Ascending aorta (tissue), 2 donors: ENCODE measurements at regions of chr9 and their contacts with region 1.

Region 1: DNA sequence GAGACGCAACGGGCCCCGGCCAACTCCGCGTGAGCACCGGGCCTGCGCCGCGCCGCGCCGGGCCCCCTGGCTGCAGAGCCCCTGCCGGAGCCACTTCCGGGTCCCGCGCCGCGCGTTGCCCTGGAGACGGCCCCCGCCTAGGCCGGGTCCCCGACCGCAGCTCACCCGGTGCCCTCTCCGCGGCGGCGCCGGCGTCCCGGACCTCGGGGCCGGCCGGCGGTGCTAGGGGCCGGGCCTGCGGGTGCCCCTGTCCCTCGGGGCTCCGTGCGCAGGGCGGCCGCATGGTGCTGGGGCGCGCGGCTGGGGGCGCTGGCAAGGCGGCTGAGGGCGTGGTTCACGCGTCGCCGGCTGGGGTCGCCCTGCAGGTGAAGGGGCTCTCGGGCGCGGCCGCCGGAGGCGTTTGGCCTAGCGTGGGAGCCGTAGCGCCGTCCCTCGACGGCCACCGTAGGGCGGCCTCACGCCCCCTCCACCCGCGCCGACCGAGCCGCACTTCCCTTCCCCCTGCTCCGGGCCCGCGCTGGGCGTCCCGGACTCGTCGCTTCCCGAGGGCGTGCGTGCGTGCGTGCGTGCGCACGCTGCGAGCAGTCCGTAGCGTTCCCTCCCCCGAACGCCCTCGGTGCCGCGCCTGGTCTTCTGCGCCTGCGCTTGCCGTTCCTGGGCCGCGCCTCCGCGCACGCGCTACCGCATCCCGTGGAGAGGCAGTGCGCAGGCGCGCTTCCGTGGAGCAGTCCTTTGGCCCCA is at the start of gene TMEM250:
- DNase-seq: peak; percentile 74 to 96
- H3K4me3 ChIP-seq: peak within 1 kb of the TSS; percentile 71 to 86
- H3K27ac ChIP-seq: peak within 1 kb of the TSS; percentile 88 to 94
- H3K4me1 ChIP-seq: peaks cover 10 to 19% of the 10 kb centered on the region in 2 donors
- H3K27me3 ChIP-seq: no peaks in the 10 kb centered on the region
- CTCF ChIP-seq: peak in 1 of 3 experiments; percentile 38
- total RNA-seq, gene TMEM250: 80.3 TPM

Region 2: GRCh38 chr9:135864447-135865049 is 253.9 kb before region 1 on chr9:
- intact Hi-C with region 1: loop called (anchors 2 kb)
- DNase-seq: no peak
- H3K4me3 ChIP-seq: no peak overlapping the region
- H3K27ac ChIP-seq: no peak overlapping the region
- H3K4me1 ChIP-seq: no peaks in the 10 kb centered on the region
- H3K27me3 ChIP-seq: no peaks in the 10 kb centered on the region
- CTCF ChIP-seq: peak; percentile 66 to 80 (median 78)

Region 3: GRCh38 chr9:135961277-135961705 is 157.2 kb before region 1 on chr9 and contains the start of gene UBAC1:
- intact Hi-C with region 1: loop called (anchors 1 kb)
- DNase-seq: peak; percentile 86 to 98
- H3K4me3 ChIP-seq: peak within 1 kb of the TSS; percentile 67 to 96
- H3K27ac ChIP-seq: peak within 1 kb of the TSS; percentile 73 to 91
- H3K4me1 ChIP-seq: peaks cover 3 to 12% of the 10 kb centered on the region in 2 donors
- H3K27me3 ChIP-seq: no peaks in the 10 kb centered on the region
- CTCF ChIP-seq: peak in 2 of 3 experiments; percentile 13 to 70
- total RNA-seq, gene UBAC1: 31.0 TPM

Region 4: DNA sequence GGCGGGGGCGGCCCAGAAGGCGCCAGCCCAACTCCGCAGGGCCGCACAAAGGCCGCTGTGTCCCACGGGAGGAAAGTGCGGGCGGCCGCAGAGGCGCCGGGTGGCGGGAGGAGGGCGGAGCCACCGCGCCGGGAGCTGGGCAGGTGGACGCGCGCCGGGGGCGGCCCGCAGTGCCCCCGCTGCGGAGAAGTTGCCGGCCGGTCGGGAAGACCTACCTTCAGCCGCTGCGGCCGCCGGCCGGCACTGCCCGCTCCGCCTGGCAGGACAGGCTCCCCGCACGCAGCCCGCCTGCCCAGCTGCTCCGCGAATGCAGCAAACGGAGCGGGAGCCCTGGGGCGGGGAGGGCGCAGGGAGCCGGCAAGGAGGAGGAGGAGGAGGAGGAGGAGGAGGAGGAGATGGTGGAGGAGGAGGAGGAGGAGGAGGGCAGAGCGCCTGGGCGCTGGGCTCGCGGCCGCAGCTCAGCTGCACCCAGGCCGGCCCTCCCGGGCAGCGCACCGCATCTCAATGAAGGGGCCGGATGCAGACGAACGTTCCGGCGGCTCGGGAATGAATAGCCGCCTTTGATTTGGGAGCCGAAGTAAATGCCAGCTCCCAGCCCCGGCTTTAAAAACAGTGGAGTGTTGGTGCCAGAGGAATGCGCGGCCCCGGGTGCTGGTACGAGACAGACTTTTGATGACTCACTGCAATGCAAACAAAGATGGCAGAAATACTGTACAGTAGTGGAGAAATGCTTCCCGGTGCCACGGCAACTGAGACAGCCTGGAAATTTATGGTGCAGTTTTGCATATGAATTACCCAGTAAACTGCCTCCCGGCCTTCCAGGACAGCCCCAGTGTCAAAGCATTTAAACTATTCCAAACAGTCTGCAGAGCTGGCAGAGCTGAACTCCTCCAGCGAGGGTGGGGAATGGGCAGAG is 66.7 kb before region 1 on chr9:
- intact Hi-C with region 1: loop called (anchors 2 kb)
- DNase-seq: peak in 1 of 2 donors; percentile 85
- H3K4me3 ChIP-seq: peak overlapping the region; percentile 37 to 65
- H3K27ac ChIP-seq: peak overlapping the region; percentile 44 to 79
- H3K4me1 ChIP-seq: peaks cover 27 to 45% of the 10 kb centered on the region in 2 donors
- H3K27me3 ChIP-seq: no peaks in the 10 kb centered on the region
- CTCF ChIP-seq: no peak

Region 5: GRCh38 chr9:136245219-136246150 is 127.0 kb after region 1 on chr9 and contains the start of gene QSOX2:
- intact Hi-C with region 1: loop called (anchors 2 kb)
- DNase-seq: peak; percentile 18 to 87
- H3K4me3 ChIP-seq: peak within 1 kb of the TSS; percentile 69 to 94
- H3K27ac ChIP-seq: peak within 1 kb of the TSS in 1 of 2 donors; percentile 3
- H3K4me1 ChIP-seq: peaks cover 5 to 14% of the 10 kb centered on the region in 2 donors
- H3K27me3 ChIP-seq: no peaks in the 10 kb centered on the region
- CTCF ChIP-seq: no peak
- total RNA-seq, gene QSOX2: 3.7 TPM

Region 6: GRCh38 chr9:136769710-136770191 is 651.3 kb after region 1 on chr9:
- intact Hi-C with region 1: no loop called
- DNase-seq: no peak
- H3K4me3 ChIP-seq: no peak overlapping the region
- H3K27ac ChIP-seq: no peak overlapping the region
- H3K4me1 ChIP-seq: no peaks in the 10 kb centered on the region
- H3K27me3 ChIP-seq: peaks cover 4% of the 10 kb centered on the region
- CTCF ChIP-seq: peak in 2 of 3 experiments; percentile 25 to 44